Tibial artery (tissue), 4 donors: ENCODE measurements at regions of chr1 and their contacts with region 1.

Region 1: GRCh38 chr1:243917177-243917862 is 67.3 kb upstream of the AKT3 start:
- DNase-seq: no peak
- H3K4me3 ChIP-seq: peak overlapping the region; percentile 52 to 59
- H3K27ac ChIP-seq: peak overlapping the region; percentile 42 to 46
- H3K4me1 ChIP-seq: peaks cover 0 to 39% (median 10%) of the 10 kb centered on the region in 4 donors
- H3K27me3 ChIP-seq: no peaks in the 10 kb centered on the region
- CTCF ChIP-seq: no peak

Region 2: GRCh38 chr1:243864913-243865312 is 52.4 kb before region 1 on chr1:
- intact Hi-C with region 1: loop called (anchors 10 kb)
- DNase-seq: no peak
- H3K4me3 ChIP-seq: no peak overlapping the region
- H3K27ac ChIP-seq: no peak overlapping the region
- H3K4me1 ChIP-seq: no peaks in the 10 kb centered on the region
- H3K27me3 ChIP-seq: no peaks in the 10 kb centered on the region
- CTCF ChIP-seq: no peak